Activated CD8-positive, alpha-beta memory T cell treated with anti-CD3 and anti-CD28 coated beads, Interleukin-2, amount 10 ng/mL, durations not matched to agents 7 days and 5 days (primary cell): ENCODE measurements at regions of chr22 and their contacts with region 1.

Region 1: GRCh38 chr22:36301384-36301828 is 48.5 kb downstream of the APOL1 start:
- DNase-seq: peak; percentile 86
- ATAC-seq: peak; percentile 86
- H3K4me3 Mint-ChIP-seq: no peak overlapping the region
- H3K27ac Mint-ChIP-seq: peak overlapping the region; percentile 71
- H3K4me1 Mint-ChIP-seq: peaks cover 9% of the 10 kb centered on the region
- H3K27me3 Mint-ChIP-seq: no peaks in the 10 kb centered on the region

Region 2: DNA sequence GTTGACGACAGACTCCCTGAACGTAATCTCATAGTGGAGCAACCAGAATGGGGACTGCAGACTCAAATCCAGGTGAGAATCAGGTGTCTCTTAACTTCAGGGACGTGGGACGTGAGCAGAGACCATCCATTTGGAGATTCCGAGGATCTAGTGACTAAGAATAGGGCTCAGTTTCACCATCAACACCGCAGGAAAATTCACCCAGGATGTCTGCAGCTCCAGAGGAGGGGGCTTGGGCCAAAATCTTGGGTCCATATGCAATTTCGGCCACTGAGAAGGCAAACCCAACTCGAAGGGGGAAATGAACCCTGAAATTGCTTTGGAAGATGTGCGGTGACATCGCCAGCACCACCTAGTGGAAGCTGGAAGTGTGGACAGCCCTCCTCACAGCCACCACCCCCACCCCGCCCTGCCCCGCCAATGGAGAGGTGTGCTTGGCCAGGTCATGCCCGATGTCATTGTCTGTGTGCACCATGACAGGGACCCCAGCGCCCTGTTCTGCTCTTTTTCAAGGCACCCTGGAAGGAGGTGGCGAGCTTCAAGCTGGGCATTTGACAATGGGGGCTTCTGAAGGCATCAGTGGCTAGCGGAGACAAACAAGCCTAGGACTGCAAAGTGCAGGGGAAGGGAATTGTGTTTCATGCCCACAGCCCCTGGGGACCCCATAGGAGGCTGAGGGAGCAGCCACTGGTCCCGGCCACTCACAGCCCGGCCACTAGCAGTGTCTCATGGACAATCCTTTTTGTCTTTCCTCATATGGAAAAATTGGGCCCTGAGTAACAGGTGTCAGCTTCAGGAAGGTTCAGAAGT is 23.7 kb before region 1 on chr22:
- CTCF ChIA-PET with region 1: interaction called, 10 read pairs
- DNase-seq: peak; percentile 84
- ATAC-seq: peak; percentile 79
- H3K4me3 Mint-ChIP-seq: no peak overlapping the region
- H3K27ac Mint-ChIP-seq: peak overlapping the region; percentile 69
- H3K4me1 Mint-ChIP-seq: peaks cover 35% of the 10 kb centered on the region
- H3K27me3 Mint-ChIP-seq: no peaks in the 10 kb centered on the region

Region 3: DNA sequence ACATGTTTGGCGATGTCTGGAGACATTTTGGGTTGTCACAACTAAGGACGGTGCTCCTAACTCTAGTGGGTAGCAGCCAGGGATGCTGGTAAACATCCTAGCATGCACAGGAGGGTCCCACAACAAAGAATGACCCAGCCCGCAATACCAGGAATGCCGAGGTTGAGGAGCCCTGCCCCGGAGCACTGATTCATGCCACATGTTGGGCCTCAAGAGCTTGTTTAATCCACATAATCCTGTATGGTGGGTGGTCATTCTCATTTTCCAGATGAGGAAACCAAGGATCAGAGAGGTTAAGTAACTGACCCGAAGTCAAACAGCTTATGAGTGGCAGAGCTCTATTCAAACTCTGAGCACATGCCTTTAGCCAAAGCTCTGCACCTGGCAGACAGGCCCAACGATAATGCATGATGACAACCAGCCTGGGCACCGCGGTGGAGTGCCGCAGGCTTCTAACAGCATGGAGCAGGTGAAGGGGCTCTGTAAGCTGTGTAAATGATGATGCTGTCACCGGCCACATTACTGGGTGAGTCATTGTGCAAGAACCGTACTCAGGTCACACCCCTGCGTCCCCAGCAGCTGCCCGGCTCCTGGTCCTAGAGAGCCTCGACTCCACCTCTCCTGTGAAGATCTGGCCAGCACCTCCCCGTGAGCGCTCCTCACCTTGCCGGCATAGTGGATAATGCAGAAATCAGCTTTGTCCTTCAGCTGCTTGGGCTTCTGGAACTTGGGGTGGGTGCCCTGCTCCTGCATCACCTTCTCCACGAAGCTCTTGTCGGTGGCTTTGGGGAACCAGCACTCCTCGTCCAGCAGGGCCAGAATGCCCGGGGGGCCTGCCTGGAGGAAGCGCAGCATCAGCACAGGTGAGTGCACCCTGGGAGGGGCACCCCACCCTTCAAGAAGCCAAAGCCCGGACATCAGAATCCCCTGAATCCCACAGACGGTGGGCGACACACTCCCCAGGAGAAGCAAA is 10.3 kb after region 1 on chr22:
- CTCF ChIA-PET with region 1: interaction called, 43 read pairs
- DNase-seq: no peak
- ATAC-seq: no peak
- H3K4me3 Mint-ChIP-seq: no peak overlapping the region
- H3K27ac Mint-ChIP-seq: no peak overlapping the region
- H3K4me1 Mint-ChIP-seq: peaks cover 5% of the 10 kb centered on the region
- H3K27me3 Mint-ChIP-seq: no peaks in the 10 kb centered on the region

Region 4: DNA sequence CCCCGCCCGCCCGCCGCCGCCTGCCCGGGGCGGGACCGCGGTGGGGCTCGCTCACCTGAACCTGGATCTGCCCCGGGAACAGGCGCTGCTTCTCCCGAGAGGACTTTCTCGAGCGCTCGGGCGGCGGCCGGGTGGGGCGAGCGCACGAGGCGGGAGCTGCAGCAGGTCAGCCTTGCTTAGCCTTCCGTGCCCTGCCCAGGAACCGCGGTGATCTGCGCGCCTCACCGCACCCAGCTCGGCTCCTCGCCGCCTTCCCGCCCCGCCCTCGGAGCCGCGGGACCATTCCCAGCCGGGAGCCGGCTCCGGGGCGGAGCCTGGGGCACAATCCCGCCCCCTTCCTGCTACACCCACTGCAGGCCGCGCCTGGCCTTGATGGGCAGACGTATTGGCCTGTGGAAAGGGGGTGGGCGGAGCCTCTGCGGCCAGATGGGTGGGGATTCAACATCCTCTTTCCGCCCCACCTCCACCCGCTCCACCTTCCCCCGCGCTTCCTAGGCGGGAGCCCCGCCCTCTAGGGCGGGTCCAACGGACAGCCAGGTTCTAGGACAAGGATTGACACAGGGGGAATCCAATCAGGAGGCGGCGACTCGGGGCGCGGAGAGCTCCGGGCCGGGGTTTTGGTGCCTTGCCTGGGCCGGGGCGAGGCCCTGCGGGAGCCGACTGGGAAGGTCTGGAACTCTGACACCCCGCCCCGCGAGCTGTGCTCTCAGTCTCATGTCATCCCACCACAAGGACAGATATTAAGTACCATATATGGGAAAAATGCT is 86.5 kb after region 1 on chr22 and contains the start of gene MYH9:
- CTCF ChIA-PET with region 1: interaction called, 15 read pairs
- DNase-seq: peak; percentile 100
- ATAC-seq: peak; percentile 86
- H3K4me3 Mint-ChIP-seq: peak within 1 kb of the TSS; percentile 88
- H3K27ac Mint-ChIP-seq: peak within 1 kb of the TSS; percentile 92
- H3K4me1 Mint-ChIP-seq: peaks cover 38% of the 10 kb centered on the region
- H3K27me3 Mint-ChIP-seq: no peaks in the 10 kb centered on the region
- total RNA-seq, gene MYH9: 695 to 913 TPM

Region 5: GRCh38 chr22:36486619-36487384 is 185.4 kb after region 1 on chr22:
- CTCF ChIA-PET with region 1: interaction called, 16 read pairs
- DNase-seq: peak; percentile 73
- ATAC-seq: no peak
- H3K4me3 Mint-ChIP-seq: no peak overlapping the region
- H3K27ac Mint-ChIP-seq: no peak overlapping the region
- H3K4me1 Mint-ChIP-seq: peaks cover 11% of the 10 kb centered on the region
- H3K27me3 Mint-ChIP-seq: no peaks in the 10 kb centered on the region